ENCODE measurements at regions of chr20 and their contacts with region 1.

Region 1: GRCh38 chr20:49888345-49888966 is 26.9 kb downstream of the SPATA2 start:
- DNase-seq: peak; percentile 54
- H3K4me3 Mint-ChIP-seq: no peak overlapping the region
- H3K27ac Mint-ChIP-seq: no peak overlapping the region
- H3K4me1 Mint-ChIP-seq: peaks cover 7% of the 10 kb centered on the region
- H3K27me3 Mint-ChIP-seq: no peaks in the 10 kb centered on the region
- CTCF ChIP-seq: peak; percentile 92

Region 2: GRCh38 chr20:49872056-49872455 is 16.4 kb before region 1 on chr20:
- CTCF ChIA-PET with region 1: interaction called, 12 read pairs
- POLR2A ChIA-PET with region 1: no interaction called
- intact Hi-C with region 1: no loop called
- DNase-seq: no peak
- H3K4me3 Mint-ChIP-seq: no peak overlapping the region
- H3K27ac Mint-ChIP-seq: no peak overlapping the region
- H3K4me1 Mint-ChIP-seq: no peaks in the 10 kb centered on the region
- H3K27me3 Mint-ChIP-seq: no peaks in the 10 kb centered on the region
- CTCF ChIP-seq: no peak

Region 3: GRCh38 chr20:49899541-49900383 is 11.3 kb after region 1 on chr20:
- CTCF ChIA-PET with region 1: interaction called, 20 read pairs
- POLR2A ChIA-PET with region 1: interaction called, 3 read pairs
- intact Hi-C with region 1: no loop called
- DNase-seq: no peak
- H3K4me3 Mint-ChIP-seq: no peak overlapping the region
- H3K27ac Mint-ChIP-seq: no peak overlapping the region
- H3K4me1 Mint-ChIP-seq: peaks cover 6% of the 10 kb centered on the region
- H3K27me3 Mint-ChIP-seq: no peaks in the 10 kb centered on the region
- CTCF ChIP-seq: no peak

Region 4: DNA sequence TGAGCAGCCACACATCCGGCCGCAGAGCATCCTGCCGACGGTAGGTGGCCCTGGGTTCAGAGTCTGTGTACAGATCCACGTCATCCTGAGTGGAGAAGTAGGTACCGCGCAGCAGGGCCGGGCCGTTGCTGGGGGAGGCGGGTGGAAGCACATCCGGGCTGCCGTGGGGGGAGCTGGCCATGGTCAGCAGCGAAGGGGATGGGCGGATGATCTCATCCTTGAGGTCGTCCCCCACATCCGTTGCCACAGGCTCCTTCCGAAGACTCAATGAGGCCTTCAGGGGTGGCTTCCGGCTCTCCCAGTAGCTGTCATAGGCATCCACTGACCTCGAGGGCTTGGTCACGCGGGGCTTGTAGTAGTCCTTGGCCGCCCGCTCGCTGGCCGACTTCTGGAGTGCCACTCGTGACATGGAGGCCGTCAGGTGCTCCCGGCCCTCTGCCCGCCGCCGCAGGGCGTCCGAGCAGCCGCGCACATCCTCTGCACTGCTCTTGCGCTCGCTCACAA is 17.7 kb after region 1 on chr20:
- CTCF ChIA-PET with region 1: interaction called, 14 read pairs
- POLR2A ChIA-PET with region 1: interaction called, 4 read pairs
- intact Hi-C with region 1: no loop called
- DNase-seq: no peak
- H3K4me3 Mint-ChIP-seq: no peak overlapping the region
- H3K27ac Mint-ChIP-seq: no peak overlapping the region
- H3K4me1 Mint-ChIP-seq: no peaks in the 10 kb centered on the region
- H3K27me3 Mint-ChIP-seq: no peaks in the 10 kb centered on the region
- CTCF ChIP-seq: no peak

Region 5: DNA sequence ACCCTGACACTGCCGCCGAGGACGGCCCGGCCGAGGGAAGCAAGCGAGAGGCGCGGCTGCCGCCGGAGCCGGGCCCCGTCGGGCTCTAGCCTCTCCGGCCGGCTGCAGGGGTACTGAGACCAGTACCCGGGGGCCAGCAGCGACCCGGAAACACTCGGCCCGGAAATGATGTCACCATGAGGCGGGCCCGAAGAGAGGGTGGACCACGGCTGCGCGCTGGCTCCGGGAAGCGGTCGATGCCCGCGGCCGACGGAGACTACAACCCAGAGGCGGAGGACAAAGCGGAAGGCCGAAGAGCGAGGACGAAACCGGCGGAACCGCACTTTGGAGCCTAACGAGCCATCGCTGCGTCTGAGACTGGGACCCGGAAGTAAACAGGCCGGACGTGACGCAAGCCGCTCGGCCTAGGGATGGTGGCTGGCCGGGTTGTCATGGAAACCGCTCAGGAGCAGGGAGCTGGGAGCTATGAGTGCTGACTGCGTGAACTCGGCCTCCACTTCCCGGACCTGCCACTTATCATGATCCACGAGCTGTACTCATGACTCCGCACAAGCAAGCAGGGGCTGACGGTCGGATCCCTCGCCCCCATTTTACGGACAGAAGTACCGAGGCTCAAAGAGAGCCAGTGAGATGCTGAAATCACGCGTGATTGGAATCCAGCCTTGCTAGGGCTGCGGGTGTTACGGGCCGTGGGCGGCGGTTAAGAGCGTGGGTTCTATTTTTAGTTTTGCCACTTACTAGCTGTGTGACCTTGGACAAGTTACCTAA is 27.1 kb after region 1 on chr20 and contains the start of gene SPATA2:
- CTCF ChIA-PET with region 1: interaction called, 13 read pairs
- POLR2A ChIA-PET with region 1: interaction called, 4 read pairs
- intact Hi-C with region 1: no loop called
- DNase-seq: peak; percentile 93
- H3K4me3 Mint-ChIP-seq: peak within 1 kb of the TSS; percentile 90
- H3K27ac Mint-ChIP-seq: peak within 1 kb of the TSS; percentile 99
- H3K4me1 Mint-ChIP-seq: peaks cover 18% of the 10 kb centered on the region
- H3K27me3 Mint-ChIP-seq: no peaks in the 10 kb centered on the region
- CTCF ChIP-seq: no peak
- total RNA-seq, gene SPATA2: 5.5 and 8.6 TPM in 2 replicates

Region 6: GRCh38 chr20:49928401-49929141 is 40.1 kb after region 1 on chr20:
- CTCF ChIA-PET with region 1: interaction called, 3 read pairs
- POLR2A ChIA-PET with region 1: no interaction called
- intact Hi-C with region 1: loop called (anchors 2 kb)
- DNase-seq: peak; percentile 84
- H3K4me3 Mint-ChIP-seq: no peak overlapping the region
- H3K27ac Mint-ChIP-seq: no peak overlapping the region
- H3K4me1 Mint-ChIP-seq: no peaks in the 10 kb centered on the region
- H3K27me3 Mint-ChIP-seq: no peaks in the 10 kb centered on the region
- CTCF ChIP-seq: peak; percentile 80

Region 7: DNA sequence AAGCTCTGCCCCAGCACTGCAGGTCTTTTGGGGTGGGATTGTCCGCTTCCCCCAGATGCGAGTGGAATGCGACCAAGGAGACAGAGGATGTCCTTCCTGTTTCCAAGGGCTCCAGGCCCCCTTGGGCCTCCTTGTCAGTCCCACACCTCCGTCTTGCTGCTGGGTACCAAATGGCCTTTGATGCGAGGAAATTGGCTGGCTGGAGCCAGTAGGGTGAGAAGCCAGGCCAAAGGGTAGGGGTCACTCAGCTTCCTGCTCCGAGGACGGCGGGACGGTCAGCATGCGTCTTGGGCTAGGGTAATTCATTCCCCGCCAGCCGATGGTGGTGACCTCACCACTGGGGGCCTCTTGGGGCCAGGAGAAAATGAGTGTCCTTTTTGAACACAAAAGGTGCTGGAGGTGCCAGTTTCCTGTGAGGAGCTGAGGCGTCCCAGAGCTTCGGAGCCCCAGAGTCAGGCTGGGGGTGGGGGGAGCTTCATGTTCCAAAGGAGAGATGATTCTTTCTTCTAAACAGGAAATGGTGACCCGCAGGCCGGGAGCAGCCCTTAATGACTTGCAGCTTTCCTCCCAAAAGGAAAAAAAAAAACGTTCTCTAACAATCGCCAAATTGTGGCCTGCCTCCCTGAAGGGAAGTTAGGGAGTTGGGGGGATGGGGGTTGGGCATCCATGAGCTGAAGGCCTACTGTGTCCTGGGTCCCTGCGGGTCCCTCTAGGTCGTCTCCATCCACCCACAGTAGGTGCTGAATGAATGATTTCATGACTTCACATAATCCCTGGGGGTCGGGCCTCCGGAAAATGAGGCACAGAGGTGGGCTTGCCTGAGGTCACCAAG is 101.0 kb after region 1 on chr20:
- CTCF ChIA-PET with region 1: no interaction called
- POLR2A ChIA-PET with region 1: no interaction called
- intact Hi-C with region 1: no loop called
- DNase-seq: no peak
- H3K4me3 Mint-ChIP-seq: no peak overlapping the region
- H3K27ac Mint-ChIP-seq: no peak overlapping the region
- H3K4me1 Mint-ChIP-seq: peaks cover 4% of the 10 kb centered on the region
- H3K27me3 Mint-ChIP-seq: no peaks in the 10 kb centered on the region
- CTCF ChIP-seq: no peak

Measured in MCF 10A (cell line).